Mammary epithelial cell (primary cell): ENCODE measurements at regions of chr10 and their contacts with region 1.

Region 1: GRCh38 chr10:128481152-128481840 is 355.1 kb upstream of the MKI67 start:
- DNase-seq: no peak
- H3K4me3 ChIP-seq: no peak overlapping the region
- H3K27ac ChIP-seq: no peak overlapping the region
- H3K4me1 ChIP-seq: no peaks in the 10 kb centered on the region
- H3K27me3 ChIP-seq: no peaks in the 10 kb centered on the region
- CTCF ChIP-seq: no peak

Region 2: DNA sequence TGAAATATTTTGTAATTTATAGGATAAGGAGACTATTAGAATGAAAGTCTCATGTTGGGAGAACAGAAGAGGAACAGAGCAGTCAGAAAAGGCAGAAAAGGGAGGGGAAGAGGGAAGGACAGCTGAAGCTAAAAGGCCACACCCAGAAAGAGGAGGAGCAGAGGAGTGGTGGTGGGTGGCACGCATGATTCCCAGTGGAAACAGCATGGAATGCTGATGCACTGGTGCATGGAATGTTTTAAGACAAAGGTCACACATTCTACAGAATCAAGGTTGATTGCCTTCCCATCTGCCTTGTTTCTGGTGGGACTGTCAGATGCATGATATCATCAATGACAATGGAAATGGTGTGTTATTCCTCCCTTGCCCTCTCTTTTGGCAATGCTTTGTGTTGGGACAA is 69.7 kb before region 1 on chr10:
- CTCF ChIA-PET with region 1: no interaction called
- dilution Hi-C with region 1: loop called (anchors 5 kb)
- in situ Hi-C with region 1: no loop called
- intact Hi-C with region 1: no loop called
- DNase-seq: no peak
- H3K4me3 ChIP-seq: no peak overlapping the region
- H3K27ac ChIP-seq: no peak overlapping the region
- H3K4me1 ChIP-seq: no peaks in the 10 kb centered on the region
- H3K27me3 ChIP-seq: no peaks in the 10 kb centered on the region
- CTCF ChIP-seq: no peak

Region 3: DNA sequence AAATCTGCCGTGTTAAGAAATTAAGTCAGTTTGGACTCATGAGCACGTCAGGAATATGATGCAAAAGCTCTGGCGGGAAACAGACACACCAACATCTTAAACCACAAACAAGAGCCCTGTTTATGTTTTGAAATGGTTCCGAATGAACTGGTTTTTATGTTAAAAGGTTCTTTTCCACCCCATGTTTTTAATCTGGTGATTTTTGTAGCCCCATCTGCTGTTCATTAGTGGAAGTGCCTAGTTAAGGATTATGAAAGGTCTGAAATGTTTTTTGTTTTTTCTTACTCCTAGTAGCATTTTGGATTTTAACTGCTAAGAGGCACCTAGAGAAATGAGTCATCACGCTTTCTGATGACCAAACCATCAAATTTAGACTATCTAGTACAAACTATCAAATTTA is 49.0 kb after region 1 on chr10:
- CTCF ChIA-PET with region 1: no interaction called
- dilution Hi-C with region 1: no loop called
- in situ Hi-C with region 1: no loop called
- intact Hi-C with region 1: no loop called
- DNase-seq: no peak
- H3K4me3 ChIP-seq: no peak overlapping the region
- H3K27ac ChIP-seq: no peak overlapping the region
- H3K4me1 ChIP-seq: no peaks in the 10 kb centered on the region
- H3K27me3 ChIP-seq: no peaks in the 10 kb centered on the region
- CTCF ChIP-seq: peak in 1 of 2 donors; percentile 34